Tibial artery (tissue), 4 donors: ENCODE measurements at regions of chr2 and their contacts with region 1.

Region 1: GRCh38 chr2:210171309-210172203 is at the start of gene KANSL1L:
- DNase-seq: peak; percentile 99 to 100
- H3K4me3 ChIP-seq: peak within 1 kb of the TSS; percentile 87 to 88
- H3K27ac ChIP-seq: peak within 1 kb of the TSS; percentile 99 to 100
- H3K4me1 ChIP-seq: peaks cover 0 to 37% (median 17%) of the 10 kb centered on the region in 4 donors
- H3K27me3 ChIP-seq: no peaks in the 10 kb centered on the region
- CTCF ChIP-seq: no peak

Region 2: DNA sequence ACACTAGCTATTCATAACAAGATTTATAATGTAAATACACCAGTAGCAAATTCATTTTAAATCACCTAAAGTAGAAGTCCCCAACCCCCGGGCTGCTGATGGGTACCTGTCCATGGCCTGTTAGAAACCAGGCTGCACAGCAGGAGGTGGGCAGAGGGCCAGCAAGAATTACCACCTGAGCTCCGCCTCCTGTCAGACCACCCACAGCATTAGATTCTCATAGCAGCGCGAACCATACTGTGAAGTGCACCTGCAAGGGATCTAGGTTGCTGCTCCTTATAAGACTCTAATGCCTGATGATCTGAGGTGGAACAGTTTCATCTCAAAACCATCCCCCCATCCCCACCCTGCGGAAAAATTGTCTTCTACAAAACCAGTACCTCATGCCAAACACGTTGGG is 71.6 kb before region 1 on chr2:
- intact Hi-C with region 1: no loop called
- DNase-seq: no peak
- H3K4me3 ChIP-seq: no peak overlapping the region
- H3K27ac ChIP-seq: no peak overlapping the region
- H3K4me1 ChIP-seq: no peaks in the 10 kb centered on the region
- H3K27me3 ChIP-seq: no peaks in the 10 kb centered on the region
- CTCF ChIP-seq: no peak

Region 3: DNA sequence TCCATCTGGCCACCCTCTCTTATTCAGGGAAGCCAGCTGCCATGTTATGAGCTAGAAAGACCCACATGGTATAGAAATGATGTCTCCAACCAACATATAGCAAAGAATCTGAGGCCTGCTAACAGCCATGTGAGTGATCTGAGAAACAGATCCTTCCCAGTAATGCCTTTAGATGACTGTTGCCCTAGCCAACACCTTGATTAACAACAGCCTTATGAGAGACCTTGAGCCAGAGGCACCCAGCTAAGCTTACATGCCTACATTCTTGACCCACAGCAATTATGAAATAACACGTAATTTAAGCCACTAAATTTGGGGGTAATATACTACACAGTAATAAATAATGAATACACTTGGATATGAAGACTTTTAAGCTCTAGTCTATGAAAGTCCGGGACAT is 13.3 kb before region 1 on chr2:
- intact Hi-C with region 1: loop called (anchors 2 kb)
- DNase-seq: no peak
- H3K4me3 ChIP-seq: no peak overlapping the region
- H3K27ac ChIP-seq: no peak overlapping the region
- H3K4me1 ChIP-seq: peaks cover 0 to 38% (median 5%) of the 10 kb centered on the region in 4 donors
- H3K27me3 ChIP-seq: no peaks in the 10 kb centered on the region
- CTCF ChIP-seq: no peak

Region 4: GRCh38 chr2:210224941-210225672 is 53.6 kb after region 1 on chr2 and contains the start of gene ACADL:
- intact Hi-C with region 1: loop called (anchors 5 kb)
- DNase-seq: peak; percentile 69 to 88
- H3K4me3 ChIP-seq: peak within 1 kb of the TSS; percentile 84 to 89
- H3K27ac ChIP-seq: peak within 1 kb of the TSS; percentile 89 to 96
- H3K4me1 ChIP-seq: peaks cover 0 to 57% (median 9%) of the 10 kb centered on the region in 4 donors
- H3K27me3 ChIP-seq: no peaks in the 10 kb centered on the region
- CTCF ChIP-seq: no peak